Activated naive CD8-positive, alpha-beta T cell treated with anti-CD3 and anti-CD28 coated beads, Interleukin-2, amount 10 ng/mL, durations not matched to agents 7 days and 5 days (primary cell): ENCODE measurements at regions of chr1 and their contacts with region 1.

Region 1: GRCh38 chr1:212162635-212163034 is 122.6 kb upstream of the PPP2R5A start:
- DNase-seq: no peak
- ATAC-seq: peak; percentile 41
- H3K4me3 Mint-ChIP-seq: peak overlapping the region; percentile 50
- H3K27ac Mint-ChIP-seq: peak overlapping the region; percentile 63
- H3K4me1 Mint-ChIP-seq: peaks cover 25% of the 10 kb centered on the region
- H3K27me3 Mint-ChIP-seq: no peaks in the 10 kb centered on the region

Region 2: GRCh38 chr1:212256369-212256768 is 93.7 kb after region 1 on chr1:
- POLR2A ChIA-PET with region 1: interaction called, 10 read pairs
- DNase-seq: peak; percentile 71
- ATAC-seq: peak; percentile 85
- H3K4me3 Mint-ChIP-seq: peak overlapping the region; percentile 68
- H3K27ac Mint-ChIP-seq: peak overlapping the region; percentile 92
- H3K4me1 Mint-ChIP-seq: peaks cover 51% of the 10 kb centered on the region
- H3K27me3 Mint-ChIP-seq: no peaks in the 10 kb centered on the region